T-cell (primary cell): ENCODE measurements at regions of chrX and their contacts with region 1.

Region 1: DNA sequence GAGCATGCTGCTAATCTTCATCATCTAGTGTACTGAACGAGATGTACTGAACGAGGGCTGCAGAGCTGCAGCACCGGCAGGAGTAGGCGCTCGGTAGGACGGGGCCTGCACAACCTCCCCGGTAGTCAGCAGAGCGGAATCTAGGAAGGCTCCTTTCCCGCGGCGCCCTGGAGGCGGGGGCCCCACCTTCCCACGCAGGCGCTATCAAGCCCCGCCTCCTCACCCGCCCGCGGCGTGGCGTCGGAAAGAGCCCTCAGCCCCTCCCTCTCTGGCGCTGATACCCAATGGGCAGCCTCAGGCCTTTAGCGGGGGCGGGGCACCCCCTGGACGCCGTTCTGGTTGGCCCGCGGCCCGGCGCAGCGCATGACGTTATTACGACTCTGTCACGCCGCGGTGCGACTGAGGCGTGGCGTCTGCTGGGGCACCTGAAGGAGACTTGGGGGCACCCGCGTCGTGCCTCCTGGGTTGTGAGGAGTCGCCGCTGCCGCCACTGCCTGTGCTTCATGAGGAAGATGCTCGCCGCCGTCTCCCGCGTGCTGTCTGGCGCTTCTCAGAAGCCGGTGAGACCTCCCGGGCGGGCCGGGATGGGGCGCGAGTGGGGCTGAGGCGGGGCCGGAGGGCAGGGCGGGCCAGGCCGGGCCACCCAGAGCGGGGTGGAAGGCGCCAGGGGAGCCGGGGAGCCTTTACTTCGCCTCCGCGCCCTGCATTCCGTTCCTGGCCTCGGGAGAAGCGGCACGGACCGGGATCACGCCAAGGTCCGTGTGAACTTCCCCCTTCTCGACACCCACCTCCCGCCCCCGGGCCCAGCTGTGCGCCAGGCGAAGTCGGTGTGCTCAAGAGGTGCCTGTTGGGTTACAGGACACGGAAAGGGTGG is at the start of gene PDHA1:
- DNase-seq: peak; percentile 78 to 95 (median 90)
- ATAC-seq: peak; percentile 94 to 99 (median 98)
- H3K4me3 ChIP-seq: peak within 1 kb of the TSS; percentile 57 to 75
- H3K4me3 Mint-ChIP-seq: peak within 1 kb of the TSS; percentile 84 to 86 (median 86)
- H3K27ac ChIP-seq: peak within 1 kb of the TSS; percentile 60
- H3K27ac Mint-ChIP-seq: peak within 1 kb of the TSS; percentile 79 to 91
- H3K4me1 ChIP-seq: peaks cover 7 to 25% of the 10 kb centered on the region in 2 experiments
- H3K4me1 Mint-ChIP-seq: peaks cover 16 to 26% (median 24%) of the 10 kb centered on the region in 3 donors
- H3K27me3 ChIP-seq: no peaks in the 10 kb centered on the region
- H3K27me3 Mint-ChIP-seq: peaks cover 0 to 21% of the 10 kb centered on the region in 2 donors
- total RNA-seq, gene PDHA1: 84.0 to 120 (median 114) TPM

Region 2: GRCh38 chrX:19127649-19128168 is 216.1 kb before region 1 on chrX:
- CTCF ChIA-PET with region 1: no interaction called
- POLR2A ChIA-PET with region 1: no interaction called
- DNase-seq: no peak
- ATAC-seq: no peak
- H3K4me3 ChIP-seq: no peak overlapping the region
- H3K4me3 Mint-ChIP-seq: no peak overlapping the region
- H3K27ac ChIP-seq: no peak overlapping the region
- H3K27ac Mint-ChIP-seq: no peak overlapping the region
- H3K4me1 ChIP-seq: no peaks in the 10 kb centered on the region
- H3K4me1 Mint-ChIP-seq: peaks cover 0 to 2% (median 0%) of the 10 kb centered on the region in 3 donors
- H3K27me3 ChIP-seq: peaks cover 9 to 12% of the 10 kb centered on the region in 2 experiments
- H3K27me3 Mint-ChIP-seq: peaks cover 25 to 29% of the 10 kb centered on the region in 2 donors

Region 3: GRCh38 chrX:19552793-19553192 is 209.0 kb after region 1 on chrX:
- CTCF ChIA-PET with region 1: interaction called in 1 of 2 experiments, 11 read pairs
- POLR2A ChIA-PET with region 1: no interaction called
- DNase-seq: no peak
- ATAC-seq: no peak
- H3K4me3 ChIP-seq: no peak overlapping the region
- H3K4me3 Mint-ChIP-seq: no peak overlapping the region
- H3K27ac ChIP-seq: no peak overlapping the region
- H3K27ac Mint-ChIP-seq: no peak overlapping the region
- H3K4me1 ChIP-seq: no peaks in the 10 kb centered on the region
- H3K4me1 Mint-ChIP-seq: peaks cover 0 to 41% (median 8%) of the 10 kb centered on the region in 3 donors
- H3K27me3 ChIP-seq: no peaks in the 10 kb centered on the region
- H3K27me3 Mint-ChIP-seq: peaks cover 0 to 9% of the 10 kb centered on the region in 2 donors